ENCODE measurements at regions of chr3 and their contacts with region 1.

Region 1: DNA sequence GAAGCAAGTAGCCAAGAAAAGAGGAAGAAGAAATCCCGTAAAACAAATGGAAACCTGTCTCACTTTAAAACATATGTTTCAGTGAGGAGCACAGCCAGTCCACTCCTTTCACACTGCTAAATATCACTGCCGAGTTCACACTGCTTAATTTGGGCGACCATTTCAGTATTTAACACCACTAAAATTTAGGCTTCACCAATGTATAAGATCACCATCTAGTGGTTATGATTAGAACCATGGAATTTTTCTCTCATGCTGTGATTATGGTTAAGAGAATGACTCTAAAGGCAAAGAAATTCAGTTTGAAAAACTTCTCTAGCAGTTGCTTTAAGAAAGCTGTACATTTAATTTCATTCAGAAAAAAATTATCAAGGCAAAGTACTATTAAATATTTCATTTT is 16.6 kb downstream of the SLC4A7 start:
- DNase-seq: no peak
- H3K4me3 Mint-ChIP-seq: no peak overlapping the region
- H3K27ac Mint-ChIP-seq: no peak overlapping the region
- H3K4me1 Mint-ChIP-seq: peaks cover 19% of the 10 kb centered on the region
- H3K27me3 Mint-ChIP-seq: no peaks in the 10 kb centered on the region

Region 2: GRCh38 chr3:27079427-27080257 is 387.9 kb before region 1 on chr3:
- CTCF ChIA-PET with region 1: no interaction called
- intact Hi-C with region 1: no loop called
- DNase-seq: no peak
- H3K4me3 Mint-ChIP-seq: no peak overlapping the region
- H3K27ac Mint-ChIP-seq: no peak overlapping the region
- H3K4me1 Mint-ChIP-seq: no peaks in the 10 kb centered on the region
- H3K27me3 Mint-ChIP-seq: peaks cover 5% of the 10 kb centered on the region

Region 3: GRCh38 chr3:27134165-27134796 is 333.3 kb before region 1 on chr3:
- CTCF ChIA-PET with region 1: no interaction called
- intact Hi-C with region 1: loop called (anchors 1 kb)
- DNase-seq: peak; percentile 70
- H3K4me3 Mint-ChIP-seq: no peak overlapping the region
- H3K27ac Mint-ChIP-seq: no peak overlapping the region
- H3K4me1 Mint-ChIP-seq: no peaks in the 10 kb centered on the region
- H3K27me3 Mint-ChIP-seq: peaks cover 1% of the 10 kb centered on the region

Region 4: GRCh38 chr3:27357665-27358258 is 109.8 kb before region 1 on chr3:
- CTCF ChIA-PET with region 1: interaction called, 7 read pairs
- intact Hi-C with region 1: loop called (anchors 1 kb)
- DNase-seq: peak; percentile 79
- H3K4me3 Mint-ChIP-seq: no peak overlapping the region
- H3K27ac Mint-ChIP-seq: no peak overlapping the region
- H3K4me1 Mint-ChIP-seq: peaks cover 15% of the 10 kb centered on the region
- H3K27me3 Mint-ChIP-seq: no peaks in the 10 kb centered on the region

Region 5: DNA sequence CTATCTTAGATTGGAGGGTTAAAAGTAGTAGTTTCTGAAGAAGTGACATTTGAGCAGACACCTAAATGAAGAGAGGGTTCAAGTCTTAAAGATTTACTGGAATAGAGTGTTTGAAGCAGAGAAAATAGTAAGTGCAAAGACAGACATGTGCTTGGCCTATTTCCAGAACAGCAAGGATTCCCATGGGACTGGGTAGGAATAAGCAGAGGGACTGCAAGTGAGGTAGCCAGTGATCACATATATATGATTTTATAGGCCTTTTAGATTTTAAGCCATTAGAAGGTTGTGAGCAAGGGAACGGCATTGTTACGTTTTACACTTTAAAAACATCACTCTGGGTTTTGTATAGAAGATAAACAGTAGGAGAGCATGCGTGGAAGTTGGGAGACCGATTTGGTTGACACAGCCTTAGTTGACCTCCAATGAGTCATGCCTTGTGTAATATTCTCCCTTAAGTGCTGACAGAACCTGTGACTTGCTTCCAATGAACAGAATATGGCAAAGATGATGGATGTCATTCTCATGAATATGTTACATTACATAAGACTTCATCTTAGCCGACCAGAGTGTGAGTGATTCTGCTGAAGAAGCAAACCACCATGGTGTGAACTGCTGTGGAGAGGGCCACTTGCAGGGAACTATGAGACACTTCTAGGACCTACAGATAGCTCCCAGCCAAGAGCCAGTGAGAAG is 53.8 kb after region 1 on chr3:
- CTCF ChIA-PET with region 1: no interaction called
- intact Hi-C with region 1: no loop called
- DNase-seq: no peak
- H3K4me3 Mint-ChIP-seq: no peak overlapping the region
- H3K27ac Mint-ChIP-seq: no peak overlapping the region
- H3K4me1 Mint-ChIP-seq: no peaks in the 10 kb centered on the region
- H3K27me3 Mint-ChIP-seq: no peaks in the 10 kb centered on the region